ENCODE measurements at regions of chr19 and their contacts with region 1.

Region 1: GRCh38 chr19:49473868-49474544 is at the start of gene FLT3LG:
- DNase-seq: peak; percentile 96
- H3K4me3 ChIP-seq: peak within 1 kb of the TSS; percentile 46 to 84
- H3K27ac ChIP-seq: 0 out of 4 replicates have a peak within 1 kb of the TSS, but pooled peaks of 1 of the 2 experiments have one; percentile 28
- H3K4me1 ChIP-seq: peaks cover 0 to 5% of the 10 kb centered on the region in 2 experiments; a peak in 2 of 4 replicates
- H3K27me3 ChIP-seq: no peaks in the 10 kb centered on the region
- CTCF ChIP-seq: peak; percentile 97
- EP300 ChIP-seq: no peak
- RAD21 ChIP-seq: peak; percentile 55
- polyA plus RNA-seq, gene FLT3LG: 4.0 and 6.4 TPM in 2 replicates

Region 2: GRCh38 chr19:49409441-49410029 is 64.5 kb before region 1 on chr19:
- CTCF ChIA-PET with region 1: no interaction called
- POLR2A ChIA-PET with region 1: no interaction called
- DNase-seq: no peak
- H3K4me3 ChIP-seq: no peak overlapping the region
- H3K27ac ChIP-seq: no peak overlapping the region
- H3K4me1 ChIP-seq: peaks cover 0 to 12% of the 10 kb centered on the region in 2 experiments; a peak in 1 of 4 replicates
- H3K27me3 ChIP-seq: no peaks in the 10 kb centered on the region
- CTCF ChIP-seq: no peak
- EP300 ChIP-seq: no peak
- RAD21 ChIP-seq: no peak

Region 3: DNA sequence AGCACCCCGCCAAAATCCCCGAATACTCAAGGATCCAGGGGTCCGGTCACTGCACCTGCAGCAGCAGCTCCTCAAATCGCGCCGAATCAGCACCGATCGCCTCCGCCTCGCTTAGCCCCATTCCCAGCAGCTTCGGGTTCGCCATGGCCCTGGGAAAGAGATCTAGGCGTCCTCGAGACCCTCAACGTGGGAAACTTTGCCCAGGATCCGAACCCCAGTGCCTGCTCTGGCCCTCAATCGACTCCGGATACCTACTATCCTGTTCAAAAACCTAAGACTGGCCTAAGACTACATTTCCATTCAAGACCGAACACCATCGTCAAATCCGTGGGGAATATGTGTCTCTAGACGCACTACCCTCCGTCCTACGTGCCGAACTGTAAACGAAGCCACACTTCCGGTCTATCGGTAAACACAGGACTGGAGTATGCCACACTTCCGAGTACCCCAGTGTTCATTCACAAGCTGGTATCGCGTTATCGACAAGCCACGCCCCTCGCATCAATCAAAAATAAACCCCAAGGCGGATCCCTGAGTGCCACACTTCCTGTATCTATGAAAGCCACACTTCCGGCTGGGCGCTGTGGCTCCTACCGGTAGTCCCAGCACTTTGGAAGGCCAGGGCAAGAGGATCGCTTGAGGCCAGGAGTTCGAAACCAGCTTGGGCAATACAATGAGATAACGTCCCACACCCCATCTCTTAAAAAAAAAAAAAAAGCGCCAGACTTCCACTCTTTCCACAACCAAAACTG is 22.4 kb before region 1 on chr19 and contains the start of gene PIH1D1:
- CTCF ChIA-PET with region 1: interaction called, 7 read pairs
- POLR2A ChIA-PET with region 1: interaction called, 14 read pairs
- DNase-seq: peak; percentile 84
- H3K4me3 ChIP-seq: peak within 1 kb of the TSS; percentile 80 to 88
- H3K27ac ChIP-seq: peak within 1 kb of the TSS; percentile 93 to 95
- H3K4me1 ChIP-seq: peaks cover 0 to 16% of the 10 kb centered on the region in 2 experiments; a peak in 2 of 4 replicates
- H3K27me3 ChIP-seq: no peaks in the 10 kb centered on the region
- CTCF ChIP-seq: no peak
- EP300 ChIP-seq: no peak
- RAD21 ChIP-seq: no peak
- polyA plus RNA-seq, gene PIH1D1: 145 and 157 TPM in 2 replicates

Region 4: DNA sequence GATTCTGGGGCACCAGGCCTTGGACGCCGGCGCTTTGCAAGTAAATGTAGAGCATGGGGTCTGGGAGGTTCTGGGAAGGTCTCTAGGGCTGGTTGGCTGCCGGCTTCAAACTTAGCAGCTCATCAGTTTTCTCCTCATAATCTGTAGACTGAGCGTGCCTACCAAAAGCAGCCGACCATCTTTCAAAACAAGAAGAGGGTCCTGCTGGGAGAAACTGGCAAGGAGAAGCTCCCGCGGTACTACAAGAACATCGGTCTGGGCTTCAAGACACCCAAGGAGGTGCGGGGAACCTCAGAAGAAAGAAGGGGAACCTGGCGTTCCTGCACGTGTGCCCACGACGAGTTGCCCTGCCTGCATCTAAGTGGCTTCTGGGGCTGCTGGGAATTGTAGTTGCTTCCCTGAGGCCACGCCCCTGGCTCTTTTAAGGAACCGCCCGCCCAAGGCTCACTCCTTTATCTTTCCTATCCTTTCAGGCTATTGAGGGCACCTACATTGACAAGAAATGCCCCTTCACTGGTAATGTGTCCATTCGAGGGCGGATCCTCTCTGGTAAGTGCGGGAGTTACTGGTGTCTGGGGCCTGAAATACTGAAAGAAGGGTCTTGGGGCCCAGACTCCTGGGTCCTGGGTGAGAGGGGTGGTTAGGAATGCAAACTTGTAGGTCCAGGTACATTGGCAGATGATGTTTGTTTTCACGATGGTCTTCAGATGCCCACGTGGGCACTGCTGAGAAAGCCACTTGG is 23.2 kb after region 1 on chr19:
- CTCF ChIA-PET with region 1: interaction called, 14 read pairs
- POLR2A ChIA-PET with region 1: interaction called, 9 read pairs
- DNase-seq: peak; percentile 68
- H3K4me3 ChIP-seq: peak overlapping the region; percentile 88 to 97
- H3K27ac ChIP-seq: peak overlapping the region; percentile 90 to 91; a peak in 3 of 4 replicates
- H3K4me1 ChIP-seq: peaks cover 11 to 24% of the 10 kb centered on the region in 2 experiments
- H3K27me3 ChIP-seq: no peaks in the 10 kb centered on the region
- CTCF ChIP-seq: no peak
- EP300 ChIP-seq: no peak
- RAD21 ChIP-seq: no peak

Region 5: GRCh38 chr19:49556412-49557398 is 82.7 kb after region 1 on chr19:
- CTCF ChIA-PET with region 1: no interaction called
- POLR2A ChIA-PET with region 1: no interaction called
- DNase-seq: no peak
- H3K4me3 ChIP-seq: no peak overlapping the region
- H3K27ac ChIP-seq: no peak overlapping the region
- H3K4me1 ChIP-seq: no peaks in the 10 kb centered on the region; a peak in 1 of 4 replicates
- H3K27me3 ChIP-seq: no peaks in the 10 kb centered on the region
- CTCF ChIP-seq: no peak
- EP300 ChIP-seq: no peak
- RAD21 ChIP-seq: no peak

Region 6: DNA sequence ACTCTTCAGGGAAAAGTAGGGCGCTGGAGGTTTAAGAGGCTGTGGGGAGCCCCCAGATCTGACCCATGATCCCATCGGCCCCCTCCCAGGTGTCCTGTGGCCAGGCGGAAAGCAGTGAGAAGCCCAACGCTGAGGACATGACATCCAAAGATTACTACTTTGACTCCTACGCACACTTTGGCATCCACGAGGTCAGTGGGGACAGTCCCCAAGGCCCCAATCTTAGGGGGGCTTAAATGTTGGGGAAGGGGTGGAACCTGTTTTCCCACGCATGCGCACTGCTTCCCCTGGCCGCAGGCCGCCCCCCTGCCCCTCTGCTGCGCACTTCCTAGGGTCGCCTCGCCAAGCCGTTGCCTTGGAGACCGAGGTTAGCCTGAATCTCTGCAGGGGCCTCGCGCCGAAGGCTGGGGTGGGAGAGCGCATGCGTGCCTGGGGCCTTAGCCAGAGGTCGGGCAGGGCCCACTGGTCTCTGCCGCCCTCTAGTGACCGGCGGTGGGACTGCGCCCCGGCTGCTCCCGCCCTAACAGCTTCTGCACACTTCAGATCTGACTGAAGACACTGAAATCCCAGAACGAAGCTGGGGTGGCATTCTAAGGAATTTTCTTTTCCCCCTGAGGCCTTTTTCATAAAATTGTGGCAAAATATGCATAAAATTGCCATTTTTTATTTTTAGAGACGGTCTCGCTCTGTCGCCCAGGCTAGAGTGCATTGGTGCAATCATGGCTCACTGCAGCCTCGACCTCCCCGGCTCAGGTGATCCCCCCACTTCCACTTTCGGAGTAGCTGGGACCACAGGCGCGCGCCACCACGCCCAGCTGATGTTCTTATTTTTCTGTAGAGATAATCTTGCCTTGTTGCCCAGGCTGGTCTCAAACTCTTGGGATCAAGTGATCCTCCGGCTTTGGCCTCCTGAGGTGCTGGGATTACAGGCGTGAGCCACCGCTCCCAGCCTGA is 206.7 kb after region 1 on chr19:
- CTCF ChIA-PET with region 1: no interaction called
- POLR2A ChIA-PET with region 1: no interaction called
- DNase-seq: peak; percentile 96
- H3K4me3 ChIP-seq: peak overlapping the region in 1 of 2 experiments; percentile 45; a peak in 1 of 4 replicates
- H3K27ac ChIP-seq: peak overlapping the region; percentile 36 to 42; a peak in 2 of 4 replicates
- H3K4me1 ChIP-seq: peaks cover 20 to 25% of the 10 kb centered on the region in 2 experiments; a peak in 3 of 4 replicates
- H3K27me3 ChIP-seq: no peaks in the 10 kb centered on the region
- CTCF ChIP-seq: peak; percentile 97
- EP300 ChIP-seq: no peak
- RAD21 ChIP-seq: peak; percentile 68